ENCODE measurements at regions of chr19 and their contacts with region 1.

Region 1: DNA sequence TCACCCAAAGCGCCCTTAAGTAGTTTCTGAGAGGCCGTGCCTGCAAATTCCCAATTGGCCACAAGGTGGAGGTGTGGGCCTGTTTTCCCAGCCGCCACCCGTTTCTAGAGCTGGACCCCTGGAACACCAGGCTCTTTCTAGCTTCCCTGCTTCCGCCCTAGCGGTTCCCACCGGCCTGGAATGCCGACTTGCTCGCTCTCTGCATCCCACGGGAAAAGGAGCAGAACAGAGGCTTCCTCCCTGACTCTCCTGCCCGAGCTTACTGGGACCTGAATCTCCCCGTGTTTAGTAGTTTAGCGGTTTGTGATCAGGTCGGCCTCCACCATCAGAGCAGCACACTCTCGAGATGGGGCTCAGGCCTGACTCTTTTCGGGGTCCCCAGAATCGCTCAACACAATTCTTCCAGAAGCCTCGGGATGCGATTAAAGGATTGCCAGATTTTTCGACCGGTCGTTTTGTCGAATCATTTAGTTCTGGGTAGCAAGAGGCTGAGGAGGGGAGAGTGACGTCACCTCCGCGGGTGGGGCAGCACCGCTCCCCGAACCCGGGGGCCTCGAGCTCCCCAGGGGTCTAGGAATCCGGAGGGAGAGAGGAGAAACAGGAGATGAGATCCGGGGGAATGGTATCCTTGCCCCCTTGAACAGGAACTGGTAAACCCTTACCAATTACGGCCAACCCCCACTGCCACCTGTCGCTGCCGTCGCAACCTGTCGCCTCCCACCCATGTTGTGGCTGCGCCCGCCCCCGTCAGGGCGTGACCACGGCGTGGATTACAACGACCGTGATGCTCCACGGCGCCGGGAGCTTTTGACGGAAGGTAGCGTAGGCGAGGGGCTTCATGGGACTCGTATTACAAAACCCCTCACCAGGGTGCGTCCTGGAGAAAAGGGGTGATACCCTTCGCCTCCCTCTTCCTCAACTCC is 8.0 kb downstream of the NAPSA start:
- ATAC-seq: peak; percentile 26 to 92 (median 49)
- H3K4me3 ChIP-seq: no peak overlapping the region
- H3K27ac ChIP-seq: peak overlapping the region in 1 of 2 donors; percentile 9
- H3K4me1 ChIP-seq: peaks cover 0 to 2% of the 10 kb centered on the region in 2 donors

Region 2: GRCh38 chr19:50252111-50252886 is 105.1 kb before region 1 on chr19:
- in situ Hi-C with region 1: no loop called
- ATAC-seq: no peak
- H3K4me3 ChIP-seq: no peak overlapping the region
- H3K27ac ChIP-seq: no peak overlapping the region
- H3K4me1 ChIP-seq: no peaks in the 10 kb centered on the region

Region 3: GRCh38 chr19:50461066-50461875 is 103.8 kb after region 1 on chr19:
- in situ Hi-C with region 1: loop called in 3 of 9 experiments (anchors 10 to 25 kb)
- ATAC-seq: peak; percentile 17 to 83 (median 34)
- H3K4me3 ChIP-seq: no peak overlapping the region
- H3K27ac ChIP-seq: no peak overlapping the region
- H3K4me1 ChIP-seq: peaks cover 8 to 10% of the 10 kb centered on the region in 2 donors

Region 4: DNA sequence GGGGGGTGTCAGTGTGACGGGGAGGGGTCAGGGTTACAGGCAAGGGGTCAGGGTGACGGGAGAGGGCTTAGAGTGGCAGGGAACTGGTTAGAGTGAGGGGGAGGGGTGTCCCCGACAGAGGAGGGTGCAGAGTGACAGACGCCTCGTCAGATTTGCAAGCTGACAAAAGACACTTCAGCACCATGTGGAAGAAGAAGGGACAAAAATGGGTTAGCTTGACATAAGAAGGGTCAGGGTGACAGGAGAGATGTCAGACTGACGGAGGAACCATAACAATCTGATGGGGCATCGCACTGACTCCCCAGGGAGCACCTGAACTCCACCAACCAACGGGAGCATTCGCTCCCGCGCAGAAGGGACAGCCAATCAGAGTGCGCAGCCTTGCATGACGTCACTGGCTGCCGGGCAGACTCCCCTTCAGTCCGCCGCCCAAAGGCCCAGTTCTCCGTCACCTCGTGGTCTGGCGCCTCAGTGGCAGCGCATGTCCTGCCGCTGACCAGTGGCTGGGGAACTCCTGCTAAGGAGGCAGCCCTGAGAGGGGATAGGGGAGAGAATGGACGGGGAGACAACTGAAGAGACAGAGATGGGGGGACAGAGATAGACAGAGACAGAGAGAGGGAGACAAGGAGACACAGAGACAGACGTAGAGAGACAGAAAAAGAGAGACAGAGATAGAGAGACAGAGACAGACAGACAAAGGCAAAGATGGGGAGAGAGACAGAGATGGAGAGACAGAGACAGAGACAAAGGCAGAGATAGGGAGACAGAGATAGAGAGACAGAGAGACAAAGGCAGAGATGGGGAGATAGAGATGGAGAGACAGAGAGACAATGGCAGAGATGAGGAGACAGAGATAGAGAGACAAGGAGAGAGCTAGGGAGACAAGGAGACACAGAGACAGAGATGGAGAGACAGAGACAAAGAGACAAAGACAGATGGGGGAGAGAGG is 322.0 kb after region 1 on chr19:
- in situ Hi-C with region 1: loop called in 1 of 9 experiments (anchors 25 kb)
- ATAC-seq: peak; percentile 79 to 100 (median 96)
- H3K4me3 ChIP-seq: no peak overlapping the region
- H3K27ac ChIP-seq: no peak overlapping the region
- H3K4me1 ChIP-seq: no peaks in the 10 kb centered on the region

Region 5: DNA sequence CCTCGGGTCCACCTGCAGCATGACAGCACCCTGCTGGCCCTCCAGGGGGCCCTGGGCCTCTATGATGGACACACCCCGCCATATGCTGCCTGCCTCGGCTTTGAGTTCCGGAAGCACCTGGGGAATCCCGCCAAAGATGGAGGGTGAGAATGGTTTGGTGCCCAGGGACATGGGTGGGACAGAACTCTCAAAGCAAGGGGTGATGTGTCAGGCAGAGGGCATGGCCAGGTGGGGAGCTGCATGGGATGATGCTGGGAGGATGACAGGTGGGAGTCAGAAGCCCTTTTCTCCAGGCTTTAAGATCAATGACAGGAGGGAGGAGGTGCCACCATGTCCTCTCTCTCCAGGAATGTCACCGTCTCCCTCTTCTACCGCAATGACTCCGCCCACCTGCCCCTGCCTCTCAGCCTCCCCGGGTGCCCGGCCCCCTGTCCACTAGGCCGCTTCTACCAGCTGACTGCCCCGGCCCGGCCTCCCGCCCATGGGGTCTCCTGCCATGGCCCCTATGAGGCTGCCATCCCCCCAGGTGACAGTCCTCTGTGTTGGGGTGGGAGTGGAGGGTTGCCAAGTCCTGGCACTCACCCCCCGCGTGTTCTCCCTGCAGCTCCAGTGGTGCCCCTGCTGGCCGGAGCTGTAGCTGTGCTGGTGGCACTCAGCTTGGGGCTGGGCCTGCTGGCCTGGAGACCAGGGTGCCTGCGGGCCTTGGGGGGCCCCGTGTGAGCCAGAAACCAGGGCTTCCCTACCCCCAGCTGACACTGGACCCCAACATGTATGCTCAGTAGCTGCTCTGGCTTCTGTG is 437.2 kb after region 1 on chr19:
- in situ Hi-C with region 1: loop called in 6 of 9 experiments (anchors 10 to 25 kb)
- ATAC-seq: peak in 4 of 8 experiments; percentile 11 to 40 (median 28)
- H3K4me3 ChIP-seq: no peak overlapping the region
- H3K27ac ChIP-seq: no peak overlapping the region
- H3K4me1 ChIP-seq: peaks cover 0 to 2% of the 10 kb centered on the region in 2 donors

Region 6: DNA sequence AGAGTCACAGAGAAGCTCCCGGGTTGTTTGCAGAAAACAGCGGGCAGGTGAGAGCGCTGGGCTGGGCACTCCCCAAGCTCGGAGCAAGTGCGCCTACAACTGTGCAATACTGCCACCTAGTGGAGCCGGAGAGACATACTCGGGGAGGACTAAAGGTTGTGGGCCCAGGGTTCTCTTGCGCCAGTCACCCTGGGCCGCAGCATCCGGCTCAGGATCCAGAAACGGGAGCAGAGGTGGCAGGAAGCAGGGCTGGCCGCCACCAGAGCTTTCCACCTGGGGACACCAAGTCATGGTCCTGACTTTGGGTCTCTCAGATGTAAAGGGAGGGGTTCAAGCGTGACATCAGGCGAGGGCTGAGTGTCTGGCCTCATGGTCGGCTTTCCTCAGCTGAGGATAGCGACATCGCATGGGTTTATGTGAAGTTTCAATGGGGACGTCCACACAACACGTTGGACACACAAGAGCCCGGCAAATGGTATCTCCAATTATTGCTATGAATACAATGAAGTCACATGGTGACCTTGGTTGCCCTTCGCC is 564.9 kb after region 1 on chr19:
- in situ Hi-C with region 1: loop called in 3 of 9 experiments (anchors 25 kb)
- ATAC-seq: peak; percentile 99 to 100 (median 100)
- H3K4me3 ChIP-seq: no peak overlapping the region
- H3K27ac ChIP-seq: no peak overlapping the region
- H3K4me1 ChIP-seq: peaks cover 0 to 10% of the 10 kb centered on the region in 2 donors

Region 7: DNA sequence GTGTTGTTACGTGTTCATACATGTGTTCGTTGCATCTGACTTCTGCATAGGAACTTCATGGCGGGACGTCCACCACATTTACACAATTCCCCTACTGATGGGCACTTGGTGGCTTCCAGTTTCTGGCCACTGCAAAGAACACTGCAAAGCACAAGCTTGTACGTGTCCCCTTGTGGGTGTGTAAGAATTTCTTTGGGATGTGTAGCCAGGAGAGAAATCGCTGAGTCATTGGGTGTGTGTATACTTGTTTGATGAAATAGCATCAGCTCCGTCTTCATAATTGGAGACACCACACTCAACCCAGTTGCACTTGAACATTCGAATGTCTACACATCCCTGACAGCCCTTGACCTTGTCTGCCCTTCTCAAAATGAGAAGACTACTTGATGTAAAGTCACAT is 576.2 kb after region 1 on chr19:
- in situ Hi-C with region 1: loop called in 1 of 9 experiments (anchors 25 kb)
- ATAC-seq: peak in 2 of 8 experiments; percentile 67 to 74
- H3K4me3 ChIP-seq: no peak overlapping the region
- H3K27ac ChIP-seq: no peak overlapping the region
- H3K4me1 ChIP-seq: no peaks in the 10 kb centered on the region